Cardiac septum (tissue), 1 donor: ENCODE measurements at regions of chr1 and their contacts with region 1.

Region 1: GRCh38 chr1:16155532-16156410 is at the start of gene EPHA2:
- DNase-seq: peak; percentile 95
- total RNA-seq, gene EPHA2: 26.1 TPM

Region 2: DNA sequence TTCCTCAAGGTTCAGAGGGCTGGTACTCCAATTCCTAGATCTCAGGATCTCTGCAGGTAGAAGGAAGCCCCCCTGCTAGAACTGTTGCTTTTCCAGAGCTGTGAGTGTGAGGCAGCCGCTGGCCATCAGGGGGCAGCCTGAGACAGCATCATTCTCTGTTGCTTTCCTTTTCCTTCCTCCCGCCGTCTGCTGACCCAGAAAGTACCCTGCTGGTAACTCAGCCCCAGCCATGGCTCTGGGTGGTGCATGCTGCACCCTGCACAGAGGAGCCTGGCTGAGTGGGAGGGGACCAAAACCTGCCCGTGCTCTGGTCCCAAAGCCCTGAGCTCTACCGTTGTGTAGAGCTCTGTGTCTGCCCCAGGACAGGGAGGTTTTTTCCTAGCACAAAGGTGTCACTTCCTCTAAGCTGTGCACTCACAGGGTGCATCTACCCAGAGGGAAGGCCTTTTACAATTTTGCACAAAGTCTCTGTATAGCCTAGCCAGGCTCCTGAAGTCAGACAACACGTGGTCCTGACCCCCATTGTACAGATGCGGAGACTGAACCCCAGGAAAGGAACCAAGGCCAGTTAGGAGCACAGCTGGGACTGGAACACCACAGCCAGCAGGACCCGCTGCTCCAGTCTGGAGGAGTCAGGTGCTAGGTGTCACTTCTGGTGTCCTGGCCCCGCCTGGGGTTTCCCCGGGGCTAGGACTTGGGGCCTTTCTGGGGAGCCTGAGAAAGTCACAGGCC is 76.7 kb before region 1 on chr1:
- intact Hi-C with region 1: loop called (anchors 2 kb)
- DNase-seq: no peak

Region 3: DNA sequence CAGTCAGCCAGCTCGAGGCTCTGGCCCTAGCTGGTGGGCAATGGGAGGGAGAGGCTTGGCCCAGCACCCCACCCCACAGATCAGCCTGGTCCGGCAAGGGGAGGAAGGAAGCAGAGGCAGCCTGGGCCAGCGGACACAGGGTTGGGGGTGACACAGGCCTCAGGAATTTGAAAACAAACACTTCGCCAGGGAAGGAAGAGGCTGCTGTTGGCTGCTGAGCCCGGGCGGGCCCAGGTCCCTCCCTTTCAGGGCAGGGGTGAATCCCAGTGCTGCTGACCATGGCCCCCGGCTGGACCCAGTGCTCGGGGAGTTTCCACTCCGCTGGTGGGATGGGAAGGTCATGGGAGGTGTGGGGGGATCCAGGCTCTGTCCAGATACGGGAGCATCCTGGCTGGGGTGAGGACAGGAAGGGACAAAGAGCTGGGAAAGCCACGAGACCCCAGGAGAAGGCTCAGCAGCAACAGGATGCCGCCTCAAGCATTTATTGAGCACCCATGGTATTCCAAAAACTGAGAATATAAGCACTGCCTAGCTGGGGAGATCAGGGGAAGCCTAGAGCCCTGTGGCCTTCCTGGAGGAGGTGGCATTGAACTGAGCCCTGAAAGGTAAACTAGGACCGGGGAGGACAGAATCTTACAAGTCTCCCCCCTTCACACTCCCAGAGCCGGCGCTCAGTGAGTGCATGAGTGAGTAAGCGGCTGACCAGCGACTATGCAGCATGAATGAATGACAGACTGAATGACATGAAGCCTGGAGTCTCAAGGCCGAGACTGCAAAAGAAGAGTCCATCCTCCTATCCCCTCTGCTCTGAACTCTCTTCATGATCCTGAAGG is 26.3 kb after region 1 on chr1:
- intact Hi-C with region 1: loop called (anchors 2 kb)
- DNase-seq: peak; percentile 92

Region 4: DNA sequence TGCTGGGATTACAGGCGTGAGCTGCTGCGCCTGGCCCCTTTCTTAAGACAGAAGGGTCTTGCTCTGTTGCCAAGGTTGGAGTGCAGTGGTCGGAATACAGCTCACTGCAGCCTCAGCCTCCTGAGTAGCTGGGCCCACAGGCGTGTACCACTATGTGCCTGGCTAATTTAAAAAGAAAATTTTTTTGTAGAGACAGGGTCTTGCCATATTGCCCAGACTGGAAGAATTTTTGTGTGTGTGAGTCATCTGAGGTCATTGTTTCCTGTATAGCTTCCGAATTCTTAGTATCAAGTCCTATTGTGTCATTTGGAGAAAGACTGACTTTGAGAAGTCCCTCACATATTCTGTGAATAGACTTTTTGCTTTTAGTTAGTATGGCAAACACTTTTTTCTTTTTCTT is 216.0 kb after region 1 on chr1:
- intact Hi-C with region 1: no loop called
- DNase-seq: no peak

Region 5: DNA sequence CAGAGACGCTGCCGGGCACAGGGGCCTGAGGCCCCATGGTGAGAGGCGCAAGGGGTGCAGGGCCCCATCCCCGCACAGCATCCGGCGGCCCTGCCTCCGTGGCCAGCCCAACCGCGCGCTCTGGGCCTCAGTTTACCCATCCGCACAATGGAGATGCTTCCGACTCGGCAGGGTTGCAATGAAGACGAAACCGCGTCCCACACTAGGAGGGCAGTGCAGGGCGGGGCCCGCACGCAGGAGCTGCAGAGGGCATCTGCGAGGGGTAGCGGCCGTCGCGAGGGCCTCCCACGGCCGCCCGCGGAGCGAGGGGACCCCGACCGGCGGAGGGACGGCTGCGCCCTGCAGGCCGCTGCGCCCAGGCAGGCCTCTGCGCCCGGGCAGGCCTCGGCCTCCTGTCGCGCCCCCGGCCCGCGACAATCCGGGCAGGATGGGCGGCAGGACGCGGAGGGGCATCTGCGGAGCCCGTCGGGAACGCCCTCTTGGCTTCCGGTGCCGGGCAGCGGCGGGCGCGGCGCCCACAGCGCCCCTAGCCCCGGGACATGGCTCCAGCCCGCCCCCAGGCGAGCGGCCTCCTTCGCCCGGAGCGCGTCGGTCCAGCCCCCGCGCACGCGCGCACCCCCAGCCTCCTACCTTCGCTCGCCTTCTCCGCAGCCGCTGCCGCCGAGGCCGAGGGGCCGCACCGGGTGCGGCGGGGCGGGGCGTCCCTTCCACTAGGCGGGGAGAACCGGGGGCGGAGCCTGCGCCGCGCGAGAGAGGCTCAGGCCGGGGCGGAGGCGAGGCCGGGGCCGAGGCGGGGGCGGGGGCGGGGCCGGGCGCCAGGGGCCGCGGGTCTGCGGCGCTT is 343.0 kb after region 1 on chr1:
- intact Hi-C with region 1: no loop called
- DNase-seq: peak; percentile 94